ENCODE measurements at regions of chr12 and their contacts with region 1.

Region 1: GRCh38 chr12:64065881-64066451 is 156.1 kb downstream of the KICS2 start:
- DNase-seq: peak; percentile 75
- ATAC-seq: peak; percentile 77
- H3K4me3 ChIP-seq: no peak overlapping the region
- H3K27ac ChIP-seq: no peak overlapping the region; the same call in 1 of the 2 replicates
- H3K4me1 ChIP-seq: peaks cover 11% of the 10 kb centered on the region
- H3K27me3 ChIP-seq: no peaks in the 10 kb centered on the region
- CTCF ChIP-seq: no peak
- POLR2A ChIP-seq: no peak
- RAD21 ChIP-seq: no peak

Region 2: DNA sequence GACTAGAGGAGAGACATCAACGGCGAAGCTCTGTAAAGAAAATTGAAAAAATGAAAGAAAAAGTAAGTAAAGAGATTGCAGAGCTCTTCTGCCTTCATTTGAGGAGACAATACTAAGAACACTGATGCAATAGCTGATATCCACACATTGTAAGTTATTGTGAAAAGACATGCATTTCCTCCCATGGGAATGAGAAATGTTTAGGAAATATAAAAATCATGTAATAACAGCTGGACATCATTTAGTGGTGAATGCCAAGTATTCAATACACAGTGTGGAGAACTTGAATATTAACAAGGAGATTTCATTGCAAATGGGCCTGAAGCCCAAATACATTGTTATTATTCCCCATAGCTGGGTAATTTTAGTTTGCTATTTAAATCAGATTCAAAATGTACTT is 23.1 kb before region 1 on chr12:
- CTCF ChIA-PET with region 1: no interaction called
- POLR2A ChIA-PET with region 1: no interaction called
- dilution Hi-C with region 1: no loop called
- in situ Hi-C with region 1: no loop called
- intact Hi-C with region 1: loop called (anchors 2 kb)
- DNase-seq: peak; percentile 68
- ATAC-seq: no peak; the same call in none of the 2 replicates
- H3K4me3 ChIP-seq: no peak overlapping the region
- H3K27ac ChIP-seq: peak overlapping the region; percentile 84; the same call in 1 of the 2 replicates
- H3K4me1 ChIP-seq: peaks cover 6% of the 10 kb centered on the region
- H3K27me3 ChIP-seq: no peaks in the 10 kb centered on the region
- CTCF ChIP-seq: no peak
- POLR2A ChIP-seq: no peak
- RAD21 ChIP-seq: no peak

Region 3: GRCh38 chr12:64110864-64111263 is 44.9 kb after region 1 on chr12:
- CTCF ChIA-PET with region 1: no interaction called
- POLR2A ChIA-PET with region 1: no interaction called
- dilution Hi-C with region 1: no loop called
- in situ Hi-C with region 1: no loop called
- intact Hi-C with region 1: loop called (anchors 1 kb)
- DNase-seq: peak; percentile 19
- ATAC-seq: peak; percentile 70
- H3K4me3 ChIP-seq: no peak overlapping the region
- H3K27ac ChIP-seq: no peak overlapping the region
- H3K4me1 ChIP-seq: peaks cover 6% of the 10 kb centered on the region
- H3K27me3 ChIP-seq: no peaks in the 10 kb centered on the region
- CTCF ChIP-seq: no peak
- POLR2A ChIP-seq: no peak
- RAD21 ChIP-seq: no peak

Region 4: DNA sequence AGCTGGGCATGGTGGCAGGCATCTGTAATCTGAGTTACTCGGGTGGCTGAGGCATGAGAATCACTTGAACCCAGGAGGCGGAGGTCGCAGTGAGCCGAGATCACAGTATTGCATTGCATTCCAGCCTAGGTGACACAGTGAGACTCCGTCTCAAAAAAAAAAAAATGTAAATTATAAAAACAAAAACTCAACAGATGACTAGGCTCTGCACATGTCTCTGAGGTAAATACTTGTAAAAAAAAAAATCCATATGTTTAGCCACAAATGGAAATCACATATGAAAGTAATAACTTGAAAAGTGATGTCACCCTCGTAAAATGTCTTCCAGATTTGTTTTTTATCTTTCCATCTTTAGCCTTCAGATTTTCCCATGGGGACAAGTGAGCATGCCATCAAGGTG is 71.2 kb after region 1 on chr12:
- CTCF ChIA-PET with region 1: no interaction called
- POLR2A ChIA-PET with region 1: no interaction called
- dilution Hi-C with region 1: no loop called
- in situ Hi-C with region 1: no loop called
- intact Hi-C with region 1: no loop called
- DNase-seq: peak; percentile 59
- ATAC-seq: peak; percentile 65
- H3K4me3 ChIP-seq: no peak overlapping the region
- H3K27ac ChIP-seq: no peak overlapping the region
- H3K4me1 ChIP-seq: no peaks in the 10 kb centered on the region
- H3K27me3 ChIP-seq: no peaks in the 10 kb centered on the region
- CTCF ChIP-seq: no peak
- POLR2A ChIP-seq: no peak
- RAD21 ChIP-seq: no peak